Prostate gland (tissue), 2 donors: ENCODE measurements at regions of chr16 and their contacts with region 1.

Region 1: GRCh38 chr16:88784074-88784855 is 755 bp downstream of the PIEZO1 start:
- DNase-seq: peak; percentile 71
- H3K4me3 ChIP-seq: peak overlapping the region; percentile 86 to 89
- H3K27ac ChIP-seq: peak overlapping the region; percentile 90 to 94
- H3K4me1 ChIP-seq: peaks cover 8% of the 10 kb centered on the region
- H3K27me3 ChIP-seq: no peaks in the 10 kb centered on the region
- CTCF ChIP-seq: peak; percentile 18 to 60 (median 54)
- POLR2A ChIP-seq: no peak

Region 2: DNA sequence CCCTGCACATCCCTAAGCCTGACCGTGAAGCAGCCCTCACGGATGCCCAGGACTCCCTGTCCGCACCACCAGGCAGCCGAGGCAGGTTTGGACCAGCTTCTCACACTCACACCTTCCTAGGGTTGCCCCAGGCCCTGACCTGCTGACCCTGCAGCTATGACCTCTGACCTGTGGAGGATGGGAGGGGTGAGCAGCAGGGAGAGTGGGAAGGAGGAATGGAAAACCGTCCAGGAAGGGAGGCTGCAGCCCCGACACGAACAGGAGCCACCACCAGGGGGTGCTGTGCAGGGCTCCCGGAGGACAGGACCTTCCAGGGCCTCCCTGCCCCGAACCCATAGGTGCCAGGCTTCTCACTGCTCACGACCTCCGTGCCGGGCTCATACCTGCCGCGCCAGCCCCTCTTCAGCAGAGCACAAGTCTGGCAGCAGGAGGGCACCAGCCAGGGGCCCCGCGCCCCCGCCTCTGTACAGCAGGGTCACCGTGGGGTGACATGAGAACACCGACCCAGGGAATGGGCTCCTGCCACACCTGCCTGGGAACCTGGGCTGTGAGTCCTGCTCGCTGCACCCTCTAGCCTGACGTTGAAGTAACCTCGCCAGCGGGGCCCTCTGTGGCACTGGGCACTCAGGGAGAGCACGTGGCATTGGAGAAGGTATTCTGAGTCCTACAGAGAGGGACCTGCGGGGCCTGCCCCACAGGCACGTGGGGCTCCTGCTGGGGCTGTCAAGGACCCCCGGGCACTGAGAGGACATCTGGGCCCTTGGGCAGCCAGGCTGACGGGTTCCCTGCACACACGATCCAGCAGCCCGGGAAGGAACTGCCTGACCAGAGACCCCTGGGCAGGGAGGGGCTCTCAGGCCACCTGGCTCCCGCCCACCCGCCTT is 40.3 kb before region 1 on chr16:
- intact Hi-C with region 1: loop called (anchors 1 kb)
- DNase-seq: peak; percentile 73
- H3K4me3 ChIP-seq: no peak overlapping the region
- H3K27ac ChIP-seq: peak overlapping the region in 1 of 2 donors; percentile 29
- H3K4me1 ChIP-seq: peaks cover 20% of the 10 kb centered on the region
- H3K27me3 ChIP-seq: no peaks in the 10 kb centered on the region
- CTCF ChIP-seq: peak; percentile 88 to 93 (median 90)
- POLR2A ChIP-seq: no peak